Naive thymus-derived CD8-positive, alpha-beta T cell (primary cell): ENCODE measurements at regions of chr6 and their contacts with region 1.

Region 1: GRCh38 chr6:135094403-135094848 is 39.8 kb upstream of the HBS1L start:
- DNase-seq: peak; percentile 6 to 83 (median 48)
- ATAC-seq: peak; percentile 94 to 96
- H3K4me3 Mint-ChIP-seq: peak overlapping the region in 9 of 10 donors; percentile 27 to 77 (median 61)
- H3K27ac Mint-ChIP-seq: peak overlapping the region; percentile 81 to 98 (median 90)
- H3K4me1 Mint-ChIP-seq: peaks cover 19 to 70% (median 56%) of the 10 kb centered on the region in 4 donors
- H3K27me3 Mint-ChIP-seq: no peaks in the 10 kb centered on the region

Region 2: GRCh38 chr6:135021310-135022049 is 72.9 kb before region 1 on chr6:
- POLR2A ChIA-PET with region 1: no interaction called
- DNase-seq: no peak
- ATAC-seq: peak; percentile 33 to 46
- H3K4me3 Mint-ChIP-seq: peak overlapping the region; percentile 21 to 67 (median 58)
- H3K27ac Mint-ChIP-seq: peak overlapping the region; percentile 60 to 92 (median 80)
- H3K4me1 Mint-ChIP-seq: peaks cover 27 to 68% (median 60%) of the 10 kb centered on the region in 4 donors
- H3K27me3 Mint-ChIP-seq: no peaks in the 10 kb centered on the region

Region 3: DNA sequence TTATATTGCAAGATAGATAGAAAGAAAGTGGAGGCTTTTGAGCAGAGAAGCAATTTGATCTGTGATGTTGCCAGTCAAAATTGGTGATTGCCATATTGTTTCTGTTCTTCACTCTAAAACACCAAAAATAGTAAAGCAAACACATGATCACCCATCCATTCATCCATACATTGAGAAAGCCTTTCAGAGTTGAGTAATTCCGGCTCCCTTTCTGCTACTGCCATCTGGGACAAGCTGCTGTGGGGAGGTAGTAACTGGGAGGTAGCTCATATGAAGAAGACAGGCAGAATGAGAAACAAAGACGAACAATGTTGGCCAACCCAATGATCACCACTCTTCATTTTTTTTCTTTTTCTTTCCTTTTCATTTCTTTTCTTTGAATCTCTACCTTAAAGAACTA is 11.3 kb after region 1 on chr6:
- POLR2A ChIA-PET with region 1: interaction called, 42 read pairs
- DNase-seq: no peak
- ATAC-seq: no peak
- H3K4me3 Mint-ChIP-seq: peak overlapping the region in 1 of 10 donors; percentile 47
- H3K27ac Mint-ChIP-seq: peak overlapping the region in 9 of 10 donors; percentile 50 to 95 (median 88)
- H3K4me1 Mint-ChIP-seq: peaks cover 32 to 76% (median 59%) of the 10 kb centered on the region in 4 donors
- H3K27me3 Mint-ChIP-seq: no peaks in the 10 kb centered on the region

Region 4: GRCh38 chr6:135114355-135115145 is 20.1 kb after region 1 on chr6:
- POLR2A ChIA-PET with region 1: interaction called, 10 read pairs
- DNase-seq: no peak
- ATAC-seq: no peak
- H3K4me3 Mint-ChIP-seq: peak overlapping the region in 3 of 10 donors; percentile 11 to 38 (median 12)
- H3K27ac Mint-ChIP-seq: peak overlapping the region in 8 of 10 donors; percentile 12 to 93 (median 78)
- H3K4me1 Mint-ChIP-seq: peaks cover 36 to 77% (median 66%) of the 10 kb centered on the region in 4 donors
- H3K27me3 Mint-ChIP-seq: no peaks in the 10 kb centered on the region

Region 5: GRCh38 chr6:135145063-135145800 is 50.8 kb after region 1 on chr6:
- POLR2A ChIA-PET with region 1: interaction called, 12 read pairs
- DNase-seq: peak in 5 of 10 donors; percentile 19 to 58 (median 53)
- ATAC-seq: peak; percentile 42 to 61
- H3K4me3 Mint-ChIP-seq: peak overlapping the region in 5 of 10 donors; percentile 2 to 69 (median 26)
- H3K27ac Mint-ChIP-seq: peak overlapping the region in 9 of 10 donors; percentile 0 to 87 (median 54)
- H3K4me1 Mint-ChIP-seq: peaks cover 13 to 52% (median 50%) of the 10 kb centered on the region in 4 donors
- H3K27me3 Mint-ChIP-seq: no peaks in the 10 kb centered on the region